T-cell (primary cell): ENCODE measurements at regions of chr7 and their contacts with region 1.

Region 1: GRCh38 chr7:124881981-124882380 is 47.6 kb downstream of the POT1 start:
- DNase-seq: no peak
- ATAC-seq: no peak
- H3K4me3 ChIP-seq: no peak overlapping the region
- H3K4me3 Mint-ChIP-seq: no peak overlapping the region
- H3K27ac ChIP-seq: no peak overlapping the region
- H3K27ac Mint-ChIP-seq: no peak overlapping the region
- H3K4me1 ChIP-seq: no peaks in the 10 kb centered on the region
- H3K4me1 Mint-ChIP-seq: no peaks in the 10 kb centered on the region
- H3K27me3 ChIP-seq: no peaks in the 10 kb centered on the region
- H3K27me3 Mint-ChIP-seq: no peaks in the 10 kb centered on the region

Region 2: DNA sequence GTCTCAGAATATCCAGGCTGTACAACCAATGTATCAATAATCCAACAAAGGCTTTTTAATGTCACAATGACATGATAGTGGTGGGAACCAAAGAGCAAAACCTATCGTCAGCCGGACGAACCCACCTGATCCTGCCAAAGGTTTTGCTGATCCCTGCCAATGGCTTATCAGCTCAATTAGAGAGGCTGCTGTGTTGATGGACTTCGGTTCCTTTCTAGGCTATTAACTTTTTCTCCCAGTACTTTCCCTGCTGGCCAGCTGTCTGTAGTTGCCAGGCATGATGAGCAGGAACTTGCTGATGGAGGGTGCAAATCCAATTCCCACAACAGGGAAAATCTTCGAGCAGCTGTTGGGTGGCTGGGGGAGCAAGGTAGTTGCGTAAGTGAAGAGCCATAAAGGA is 1224.0 kb before region 1 on chr7:
- CTCF ChIA-PET with region 1: no interaction called
- POLR2A ChIA-PET with region 1: interaction called in 1 of 2 experiments, 13 read pairs
- DNase-seq: no peak
- ATAC-seq: no peak
- H3K4me3 ChIP-seq: no peak overlapping the region
- H3K4me3 Mint-ChIP-seq: no peak overlapping the region
- H3K27ac ChIP-seq: no peak overlapping the region
- H3K27ac Mint-ChIP-seq: no peak overlapping the region
- H3K4me1 ChIP-seq: no peaks in the 10 kb centered on the region
- H3K4me1 Mint-ChIP-seq: no peaks in the 10 kb centered on the region
- H3K27me3 ChIP-seq: peaks cover 0 to 11% of the 10 kb centered on the region in 2 experiments
- H3K27me3 Mint-ChIP-seq: peaks cover 25 to 30% of the 10 kb centered on the region in 2 donors

Region 3: DNA sequence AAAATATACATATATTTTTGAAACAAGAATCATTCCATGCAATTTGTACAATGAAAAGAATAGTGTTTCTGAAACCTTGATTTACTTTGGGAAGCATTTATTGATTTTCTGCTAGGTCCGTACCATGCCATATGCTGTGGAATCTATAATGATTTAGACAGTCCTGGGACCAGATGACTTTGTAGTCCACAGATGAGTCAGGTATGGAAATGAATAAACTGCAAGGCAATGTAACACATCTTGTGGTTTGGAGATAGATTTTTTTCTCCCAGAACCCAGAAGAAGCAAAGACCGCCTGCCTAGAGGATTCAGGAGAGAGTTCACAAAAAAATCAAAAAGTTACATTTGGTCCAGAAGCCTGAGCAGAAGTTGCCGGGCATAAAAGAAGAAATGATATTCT is 306.8 kb before region 1 on chr7:
- CTCF ChIA-PET with region 1: no interaction called
- POLR2A ChIA-PET with region 1: no interaction called
- DNase-seq: no peak
- ATAC-seq: no peak
- H3K4me3 ChIP-seq: no peak overlapping the region
- H3K4me3 Mint-ChIP-seq: no peak overlapping the region
- H3K27ac ChIP-seq: no peak overlapping the region
- H3K27ac Mint-ChIP-seq: no peak overlapping the region
- H3K4me1 ChIP-seq: no peaks in the 10 kb centered on the region
- H3K4me1 Mint-ChIP-seq: no peaks in the 10 kb centered on the region
- H3K27me3 ChIP-seq: no peaks in the 10 kb centered on the region
- H3K27me3 Mint-ChIP-seq: no peaks in the 10 kb centered on the region